ENCODE measurements at regions of chr5 and their contacts with region 1.

Region 1: DNA sequence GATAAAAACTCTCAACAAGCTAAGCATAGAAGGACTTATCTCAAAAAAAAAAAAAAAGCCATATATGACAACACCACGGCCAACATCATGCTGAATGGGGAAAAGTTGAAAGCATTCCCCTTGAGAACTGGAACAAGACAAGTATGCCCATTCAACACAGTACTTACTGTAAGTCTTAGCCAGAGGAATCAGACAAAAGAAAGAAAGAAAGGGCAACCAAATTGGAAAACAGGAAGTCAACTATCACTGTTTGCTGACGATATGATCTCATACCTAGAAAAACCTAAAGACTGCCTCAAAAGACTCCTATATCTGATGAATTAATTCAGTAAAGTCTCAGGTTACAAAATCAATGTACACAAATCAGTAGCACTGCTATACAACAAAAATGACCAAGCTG is 24.6 kb upstream of the PTGER4 start:
- DNase-seq: no peak
- ATAC-seq: no peak
- H3K4me3 ChIP-seq: no peak overlapping the region
- H3K4me3 Mint-ChIP-seq: no peak overlapping the region
- H3K27ac ChIP-seq: no peak overlapping the region
- H3K27ac Mint-ChIP-seq: no peak overlapping the region
- H3K4me1 ChIP-seq: peaks cover 15 to 19% of the 10 kb centered on the region in 2 donors
- H3K4me1 Mint-ChIP-seq: peaks cover 29% of the 10 kb centered on the region
- H3K27me3 ChIP-seq: no peaks in the 10 kb centered on the region
- H3K27me3 Mint-ChIP-seq: no peaks in the 10 kb centered on the region
- CTCF ChIP-seq: no peak

Region 2: GRCh38 chr5:40623480-40624420 is 31.4 kb before region 1 on chr5:
- CTCF ChIA-PET with region 1: no interaction called
- POLR2A ChIA-PET with region 1: no interaction called
- intact Hi-C with region 1: loop called (anchors 5 kb)
- DNase-seq: no peak
- ATAC-seq: no peak
- H3K4me3 ChIP-seq: no peak overlapping the region
- H3K4me3 Mint-ChIP-seq: no peak overlapping the region
- H3K27ac ChIP-seq: no peak overlapping the region
- H3K27ac Mint-ChIP-seq: no peak overlapping the region
- H3K4me1 ChIP-seq: peaks cover 0 to 6% of the 10 kb centered on the region in 2 donors
- H3K4me1 Mint-ChIP-seq: peaks cover 17% of the 10 kb centered on the region
- H3K27me3 ChIP-seq: no peaks in the 10 kb centered on the region
- H3K27me3 Mint-ChIP-seq: no peaks in the 10 kb centered on the region
- CTCF ChIP-seq: no peak

Measured in B cell (primary cell).